ENCODE measurements at regions of chr19 and their contacts with region 1.

Region 1: GRCh38 chr19:47790398-47790814 is 11.9 kb downstream of the SELENOW start:
- DNase-seq: peak; percentile 87
- H3K4me3 Mint-ChIP-seq: no peak overlapping the region
- H3K27ac Mint-ChIP-seq: no peak overlapping the region
- H3K4me1 Mint-ChIP-seq: peaks cover 4% of the 10 kb centered on the region
- H3K27me3 Mint-ChIP-seq: peaks cover 2% of the 10 kb centered on the region

Region 2: DNA sequence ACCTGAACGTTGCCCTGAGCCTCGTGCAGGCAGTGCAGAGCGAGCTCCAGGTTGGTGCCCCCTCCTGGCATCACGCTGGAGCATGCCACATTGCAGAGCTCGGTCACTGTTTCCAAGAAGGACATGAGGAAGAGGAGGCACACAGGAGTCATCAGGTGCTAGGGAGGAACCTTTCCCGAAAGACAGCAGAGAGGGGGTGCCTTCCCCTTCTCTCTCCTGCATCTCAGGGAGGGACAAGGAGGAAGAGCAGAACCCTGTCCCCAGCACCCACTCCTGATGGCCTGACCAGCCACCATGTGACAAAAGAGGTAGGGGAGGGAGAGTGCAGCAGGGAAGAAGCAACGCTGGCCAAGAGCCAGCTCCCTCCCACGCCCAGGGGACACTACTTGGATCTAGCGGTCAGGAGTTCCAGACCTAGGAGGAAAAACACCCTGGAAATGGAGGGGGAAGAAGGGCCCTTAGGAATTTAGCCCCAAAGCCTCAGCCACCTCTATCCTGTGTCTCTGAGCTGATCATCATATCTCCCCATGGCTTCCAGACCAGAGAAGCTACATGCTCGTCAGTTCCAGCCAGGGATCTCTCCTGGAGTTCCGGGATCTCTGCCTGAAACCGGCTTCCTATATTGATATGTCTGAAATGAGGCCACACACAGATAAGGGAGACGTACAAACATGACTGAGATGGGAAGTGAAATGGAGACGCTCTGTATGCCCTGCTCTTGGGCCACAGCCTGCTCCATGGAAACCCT is 258.6 kb before region 1 on chr19:
- CTCF ChIA-PET with region 1: no interaction called
- POLR2A ChIA-PET with region 1: no interaction called
- intact Hi-C with region 1: no loop called
- DNase-seq: no peak
- H3K4me3 Mint-ChIP-seq: no peak overlapping the region
- H3K27ac Mint-ChIP-seq: no peak overlapping the region
- H3K4me1 Mint-ChIP-seq: no peaks in the 10 kb centered on the region
- H3K27me3 Mint-ChIP-seq: no peaks in the 10 kb centered on the region

Region 3: GRCh38 chr19:47707135-47707925 is 83.1 kb before region 1 on chr19:
- CTCF ChIA-PET with region 1: interaction called, 11 read pairs
- POLR2A ChIA-PET with region 1: no interaction called
- intact Hi-C with region 1: no loop called
- DNase-seq: peak; percentile 88
- H3K4me3 Mint-ChIP-seq: no peak overlapping the region
- H3K27ac Mint-ChIP-seq: no peak overlapping the region
- H3K4me1 Mint-ChIP-seq: no peaks in the 10 kb centered on the region
- H3K27me3 Mint-ChIP-seq: peaks cover 6% of the 10 kb centered on the region

Region 4: DNA sequence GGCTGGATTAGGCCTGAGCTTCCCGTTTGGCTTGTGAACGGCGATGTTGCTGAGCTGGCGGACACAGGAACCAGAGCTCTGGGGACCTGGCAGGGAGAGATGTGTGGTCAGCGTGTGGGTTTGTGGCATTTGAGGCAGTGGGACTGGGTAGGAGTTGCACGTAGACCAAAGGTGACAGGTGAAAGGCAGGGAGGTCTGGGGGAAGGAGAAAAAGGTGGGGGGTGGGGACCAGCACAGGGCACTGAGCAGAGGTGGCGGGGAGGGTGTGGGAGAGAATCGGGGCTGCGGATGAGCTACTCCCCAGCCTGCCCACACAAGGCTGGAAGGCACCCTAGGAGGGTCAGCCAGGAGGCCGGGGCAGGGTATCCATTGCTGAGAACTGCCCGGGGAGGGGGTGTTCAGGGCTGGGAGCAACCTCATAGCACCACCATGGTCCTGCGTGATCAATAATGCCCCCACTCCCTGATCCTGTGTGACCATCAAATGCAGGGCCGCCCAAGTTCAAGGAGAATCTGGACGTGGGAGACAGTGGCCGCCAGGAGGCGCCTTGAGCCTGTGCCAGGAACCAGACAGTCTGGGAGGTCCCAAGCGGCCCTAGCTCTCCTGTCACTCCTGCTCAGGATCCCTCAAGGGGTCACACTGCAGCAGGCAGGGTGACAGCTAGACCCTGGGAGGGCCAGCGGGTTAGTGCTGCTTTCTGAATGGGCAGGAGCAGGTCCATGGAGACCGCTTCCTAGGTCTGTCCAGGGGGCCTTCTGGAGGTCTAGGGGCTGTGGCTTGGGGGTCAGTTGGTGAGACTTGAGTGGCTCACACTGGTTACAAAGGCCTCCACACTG is 24.7 kb before region 1 on chr19:
- CTCF ChIA-PET with region 1: interaction called, 11 read pairs
- POLR2A ChIA-PET with region 1: no interaction called
- intact Hi-C with region 1: no loop called
- DNase-seq: peak; percentile 55
- H3K4me3 Mint-ChIP-seq: no peak overlapping the region
- H3K27ac Mint-ChIP-seq: no peak overlapping the region
- H3K4me1 Mint-ChIP-seq: peaks cover 4% of the 10 kb centered on the region
- H3K27me3 Mint-ChIP-seq: peaks cover 4% of the 10 kb centered on the region